Panc1 (cell line): ENCODE measurements at regions of chr13 and their contacts with region 1.

Region 1: GRCh38 chr13:37602747-37603381 is 4.3 kb upstream of the POSTN start:
- DNase-seq: no peak
- ATAC-seq: no peak
- H3K4me3 ChIP-seq: no peak overlapping the region
- H3K27ac ChIP-seq: no peak overlapping the region
- H3K4me1 ChIP-seq: no peaks in the 10 kb centered on the region
- H3K27me3 ChIP-seq: no peaks in the 10 kb centered on the region
- CTCF ChIP-seq: peak; percentile 38; the same call in 1 of the 2 replicates

Region 2: DNA sequence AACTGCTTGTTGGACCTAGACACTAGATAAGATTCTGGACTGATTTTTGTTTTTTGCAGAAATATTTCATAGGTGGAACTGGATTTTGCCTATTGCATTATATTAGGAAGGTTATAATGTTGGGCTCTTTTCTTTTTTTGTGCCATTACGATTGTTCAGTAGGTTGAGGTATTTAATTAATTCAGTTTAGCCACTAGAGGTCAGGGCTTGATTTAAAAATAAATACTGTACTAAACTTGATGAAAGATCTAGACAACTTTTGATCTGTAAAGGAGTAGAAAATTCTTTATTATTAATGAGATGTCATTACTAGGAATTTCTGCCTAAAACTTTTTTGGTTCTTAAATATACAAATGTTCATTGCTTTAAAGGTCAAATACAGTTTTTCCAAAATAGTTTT is 528.2 kb before region 1 on chr13:
- CTCF ChIA-PET with region 1: no interaction called
- POLR2A ChIA-PET with region 1: no interaction called
- in situ Hi-C with region 1: no loop called
- intact Hi-C with region 1: loop called (anchors 2 kb)
- DNase-seq: no peak
- ATAC-seq: peak; percentile 63; the same call in 1 of the 2 replicates
- H3K4me3 ChIP-seq: no peak overlapping the region
- H3K27ac ChIP-seq: no peak overlapping the region
- H3K4me1 ChIP-seq: no peaks in the 10 kb centered on the region
- H3K27me3 ChIP-seq: no peaks in the 10 kb centered on the region
- CTCF ChIP-seq: peak; percentile 38; the same call in 1 of the 2 replicates

Region 3: DNA sequence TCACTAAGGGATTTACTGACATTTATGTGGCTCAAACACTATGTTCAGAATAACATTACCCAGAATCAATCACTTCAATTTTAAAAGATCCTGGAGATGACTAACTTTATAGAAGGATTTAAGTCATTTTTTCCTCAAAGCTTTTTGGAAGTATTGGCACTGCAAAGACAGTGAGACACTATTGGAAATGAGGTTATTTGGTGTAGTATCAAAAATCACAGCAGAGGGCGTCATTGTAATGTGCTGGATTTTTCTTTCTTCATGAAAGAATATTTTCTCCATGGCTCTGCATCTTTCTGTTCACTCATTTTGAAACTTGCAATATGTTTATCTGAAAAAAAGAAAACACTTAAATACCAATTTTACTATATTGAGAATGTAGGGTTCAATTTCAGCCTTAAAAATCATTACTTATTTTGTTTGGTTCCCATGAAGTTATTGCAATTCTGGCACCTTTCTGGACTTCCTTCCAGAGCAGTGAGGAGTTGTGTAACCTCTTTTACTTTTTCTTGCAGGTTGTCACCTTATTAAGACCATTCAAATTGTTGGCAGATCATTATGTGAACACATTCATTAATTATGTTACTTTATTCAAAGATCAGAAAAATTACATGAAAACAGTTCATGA is 493.7 kb before region 1 on chr13:
- CTCF ChIA-PET with region 1: no interaction called
- POLR2A ChIA-PET with region 1: no interaction called
- in situ Hi-C with region 1: no loop called
- intact Hi-C with region 1: loop called (anchors 10 kb)
- DNase-seq: no peak
- ATAC-seq: no peak
- H3K4me3 ChIP-seq: no peak overlapping the region
- H3K27ac ChIP-seq: no peak overlapping the region
- H3K4me1 ChIP-seq: no peaks in the 10 kb centered on the region
- H3K27me3 ChIP-seq: no peaks in the 10 kb centered on the region
- CTCF ChIP-seq: peak; percentile 61; the same call in 1 of the 2 replicates

Region 4: GRCh38 chr13:37257706-37258105 is 345.2 kb before region 1 on chr13:
- CTCF ChIA-PET with region 1: no interaction called
- POLR2A ChIA-PET with region 1: no interaction called
- in situ Hi-C with region 1: no loop called
- intact Hi-C with region 1: no loop called
- DNase-seq: no peak
- ATAC-seq: no peak
- H3K4me3 ChIP-seq: no peak overlapping the region
- H3K27ac ChIP-seq: no peak overlapping the region
- H3K4me1 ChIP-seq: no peaks in the 10 kb centered on the region
- H3K27me3 ChIP-seq: no peaks in the 10 kb centered on the region
- CTCF ChIP-seq: no peak

Region 5: DNA sequence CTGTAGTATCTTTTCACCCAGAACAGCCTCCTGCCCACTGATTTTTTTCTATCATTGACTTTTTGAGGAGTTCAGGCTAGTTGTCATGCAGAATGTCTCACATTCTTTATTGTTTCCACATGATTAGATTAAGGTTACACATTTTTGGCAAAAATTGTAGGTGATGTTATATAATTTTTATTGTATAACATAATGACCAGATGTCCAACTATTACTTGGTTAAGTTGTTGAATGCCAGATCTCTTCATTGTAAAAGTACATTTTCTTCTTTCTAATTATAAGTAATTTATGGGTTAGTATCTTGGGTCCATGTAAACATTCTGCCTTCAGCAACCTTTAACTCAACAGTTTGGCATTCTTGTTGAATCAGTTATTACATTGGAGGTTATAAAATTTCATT is 142.7 kb before region 1 on chr13:
- CTCF ChIA-PET with region 1: no interaction called
- POLR2A ChIA-PET with region 1: no interaction called
- in situ Hi-C with region 1: no loop called
- intact Hi-C with region 1: no loop called
- DNase-seq: no peak
- ATAC-seq: no peak
- H3K4me3 ChIP-seq: no peak overlapping the region
- H3K27ac ChIP-seq: no peak overlapping the region
- H3K4me1 ChIP-seq: no peaks in the 10 kb centered on the region
- H3K27me3 ChIP-seq: no peaks in the 10 kb centered on the region
- CTCF ChIP-seq: no peak